WTC11 (cell line): ENCODE measurements at regions of chr2 and their contacts with region 1.

Region 1: DNA sequence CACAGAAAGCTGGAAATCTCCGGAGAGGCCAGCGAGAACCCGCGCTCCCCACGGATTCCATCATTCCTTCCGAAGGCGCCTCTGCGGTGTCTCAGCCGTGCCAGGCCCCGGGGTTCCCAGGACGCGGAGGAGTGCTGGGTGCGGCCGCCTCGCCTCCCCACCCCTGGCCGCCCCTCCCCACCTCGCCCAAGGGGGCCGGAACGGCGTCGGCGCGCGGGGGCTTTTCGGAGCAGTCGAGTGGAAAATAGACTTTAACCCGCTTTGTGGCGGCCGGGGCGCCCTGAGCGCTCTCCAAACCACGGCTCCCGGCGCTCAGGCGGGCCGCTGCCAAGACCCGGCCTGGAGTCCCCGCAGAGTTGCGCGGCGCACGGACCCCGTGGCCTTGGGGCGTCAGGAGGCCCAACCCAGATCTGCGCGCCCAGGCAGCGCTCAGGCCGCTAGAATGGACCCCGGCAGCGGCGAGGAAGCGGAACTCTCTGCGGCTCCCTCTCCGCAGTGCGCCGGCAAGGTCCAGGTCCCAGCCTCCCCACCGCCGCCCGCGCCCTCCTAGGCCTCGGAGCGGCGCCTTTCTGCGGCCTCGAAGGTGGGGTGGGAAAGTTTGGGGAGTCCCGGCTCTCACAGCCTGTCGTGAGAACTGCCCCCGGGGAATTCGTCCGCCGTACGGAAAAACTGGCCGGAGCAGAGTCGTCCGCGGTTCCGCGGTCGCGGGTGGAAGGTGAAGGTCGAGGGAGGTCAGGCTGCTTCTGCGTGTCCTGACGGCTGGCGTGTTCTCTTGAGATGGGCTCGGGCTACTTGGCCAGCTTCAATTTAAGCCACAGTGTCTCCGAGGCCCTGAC is 1.2 kb upstream of the EMX1 start:
- DNase-seq: peak; percentile 84
- ATAC-seq: peak; percentile 32
- H3K4me3 Mint-ChIP-seq: peak overlapping the region; percentile 84
- H3K27ac Mint-ChIP-seq: no peak overlapping the region
- H3K4me1 Mint-ChIP-seq: peaks cover 43% of the 10 kb centered on the region
- H3K27me3 Mint-ChIP-seq: peaks cover 61% of the 10 kb centered on the region
- CTCF ChIP-seq: no peak

Region 2: GRCh38 chr2:72871880-72872279 is 44.2 kb before region 1 on chr2:
- CTCF ChIA-PET with region 1: no interaction called
- POLR2A ChIA-PET with region 1: no interaction called
- DNase-seq: no peak
- ATAC-seq: no peak
- H3K4me3 Mint-ChIP-seq: no peak overlapping the region
- H3K27ac Mint-ChIP-seq: no peak overlapping the region
- H3K4me1 Mint-ChIP-seq: no peaks in the 10 kb centered on the region
- H3K27me3 Mint-ChIP-seq: peaks cover 32% of the 10 kb centered on the region
- CTCF ChIP-seq: no peak

Region 3: DNA sequence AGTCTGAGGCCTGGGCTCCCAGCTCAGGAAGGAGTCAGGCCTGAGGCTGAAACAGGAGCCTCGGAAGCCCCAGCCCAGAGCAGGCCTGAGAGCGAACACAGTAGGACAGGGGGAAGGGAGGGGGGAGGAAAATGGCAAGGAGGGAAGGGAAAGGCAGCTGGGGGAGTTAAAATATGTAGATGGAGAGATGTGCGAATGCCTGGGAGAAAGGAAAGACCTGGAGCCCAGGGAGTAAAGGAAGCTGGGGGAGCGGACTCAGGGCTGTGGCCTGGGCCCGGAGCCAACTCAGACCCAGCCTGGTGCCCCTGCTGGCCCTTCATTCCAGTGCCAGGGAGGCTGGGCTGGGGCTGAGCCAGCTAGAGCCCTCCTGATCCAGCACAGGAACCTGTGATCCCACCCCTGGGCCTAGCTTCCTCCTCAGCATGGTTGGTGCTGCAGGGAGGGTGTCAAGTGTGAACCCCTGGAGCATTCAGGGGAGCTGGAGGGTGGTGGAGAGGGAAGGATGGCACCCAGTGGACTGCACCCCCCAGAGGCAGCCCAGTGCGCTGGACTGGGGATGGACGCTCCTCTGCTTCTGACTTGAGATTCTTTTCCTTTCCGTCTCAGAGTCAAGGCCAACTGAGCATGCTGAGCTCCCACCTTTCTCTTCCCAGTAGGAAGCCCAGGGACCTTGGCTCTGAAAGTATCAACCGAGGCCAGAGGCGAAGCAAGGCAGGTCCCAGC is 47.5 kb after region 1 on chr2:
- CTCF ChIA-PET with region 1: interaction called, 15 read pairs
- POLR2A ChIA-PET with region 1: interaction called, 30 read pairs
- DNase-seq: peak; percentile 73
- ATAC-seq: peak; percentile 84
- H3K4me3 Mint-ChIP-seq: no peak overlapping the region
- H3K27ac Mint-ChIP-seq: peak overlapping the region; percentile 98
- H3K4me1 Mint-ChIP-seq: peaks cover 53% of the 10 kb centered on the region
- H3K27me3 Mint-ChIP-seq: peaks cover 7% of the 10 kb centered on the region
- CTCF ChIP-seq: no peak

Region 4: DNA sequence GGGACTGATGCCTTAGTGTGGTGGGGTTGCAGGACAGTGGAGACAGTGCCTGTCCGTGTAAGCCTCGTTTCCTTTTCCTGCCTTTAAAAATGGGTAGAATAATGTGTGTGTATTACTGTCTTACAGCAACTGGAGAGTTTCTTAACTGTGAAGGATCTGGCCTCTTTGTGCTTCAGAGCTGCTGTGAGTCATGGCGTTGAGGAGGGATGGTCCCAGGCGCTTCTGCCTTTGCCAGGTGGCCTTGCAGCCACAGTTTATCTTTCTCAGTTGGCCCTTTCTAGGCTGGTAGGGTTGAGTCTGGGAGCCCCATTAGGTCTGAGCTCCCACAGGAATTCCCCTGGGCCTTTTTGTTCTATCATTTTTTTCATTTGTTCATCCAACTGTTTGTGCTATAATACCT is 307.7 kb after region 1 on chr2:
- CTCF ChIA-PET with region 1: no interaction called
- POLR2A ChIA-PET with region 1: no interaction called
- DNase-seq: no peak
- ATAC-seq: no peak
- H3K4me3 Mint-ChIP-seq: no peak overlapping the region
- H3K27ac Mint-ChIP-seq: no peak overlapping the region
- H3K4me1 Mint-ChIP-seq: no peaks in the 10 kb centered on the region
- H3K27me3 Mint-ChIP-seq: no peaks in the 10 kb centered on the region
- CTCF ChIP-seq: no peak